ENCODE measurements at regions of chr22 and their contacts with region 1.

Region 1: DNA sequence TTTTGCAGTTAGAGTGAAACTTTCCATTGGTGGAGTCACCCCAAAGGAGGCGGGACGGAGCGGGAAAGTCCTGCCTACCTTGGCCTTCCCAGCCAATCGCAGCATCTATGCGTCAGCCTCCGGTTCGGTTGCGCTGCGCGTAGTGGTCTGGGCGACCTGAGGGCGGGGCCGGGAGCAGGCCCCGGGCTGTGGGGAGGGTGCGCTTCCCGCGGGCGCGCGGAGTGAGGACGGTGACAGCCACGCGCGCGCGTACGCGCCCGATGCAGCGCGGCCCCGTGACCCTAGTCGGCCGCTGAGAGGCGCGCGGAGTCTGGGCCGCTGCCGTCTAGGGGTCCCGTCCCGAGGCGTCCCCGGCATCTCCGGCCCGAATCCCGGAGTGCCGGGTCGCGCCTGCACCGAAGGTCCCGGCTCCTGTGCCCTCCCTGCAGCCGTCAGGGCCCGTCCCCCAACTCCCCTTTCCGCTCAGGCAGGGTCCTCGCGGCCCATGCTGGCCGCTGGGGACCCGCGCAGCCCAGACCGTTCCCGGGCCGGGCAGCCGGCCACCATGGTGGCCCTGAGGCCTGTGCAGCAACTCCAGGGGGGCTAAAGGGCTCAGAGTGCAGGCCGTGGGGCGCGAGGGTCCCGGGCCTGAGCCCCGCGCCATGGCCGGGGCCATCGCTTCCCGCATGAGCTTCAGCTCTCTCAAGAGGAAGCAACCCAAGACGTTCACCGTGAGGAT is at the start of gene NF2:
- DNase-seq: peak; percentile 96 to 99 (median 98)
- ATAC-seq: peak; percentile 98
- H3K4me3 ChIP-seq: peak within 1 kb of the TSS; percentile 92
- H3K4me3 Mint-ChIP-seq: peak within 1 kb of the TSS; percentile 85 to 98 (median 96)
- H3K27ac ChIP-seq: peak within 1 kb of the TSS; percentile 91
- H3K27ac Mint-ChIP-seq: peak within 1 kb of the TSS; percentile 91 to 99 (median 98)
- H3K4me1 ChIP-seq: peaks cover 11 to 16% of the 10 kb centered on the region in 2 donors
- H3K4me1 Mint-ChIP-seq: peaks cover 13 to 40% (median 28%) of the 10 kb centered on the region in 7 donors
- H3K27me3 ChIP-seq: no peaks in the 10 kb centered on the region
- H3K27me3 Mint-ChIP-seq: no peaks in the 10 kb centered on the region
- total RNA-seq, gene NF2: 27.6 to 56.3 (median 28.3) TPM

Region 2: DNA sequence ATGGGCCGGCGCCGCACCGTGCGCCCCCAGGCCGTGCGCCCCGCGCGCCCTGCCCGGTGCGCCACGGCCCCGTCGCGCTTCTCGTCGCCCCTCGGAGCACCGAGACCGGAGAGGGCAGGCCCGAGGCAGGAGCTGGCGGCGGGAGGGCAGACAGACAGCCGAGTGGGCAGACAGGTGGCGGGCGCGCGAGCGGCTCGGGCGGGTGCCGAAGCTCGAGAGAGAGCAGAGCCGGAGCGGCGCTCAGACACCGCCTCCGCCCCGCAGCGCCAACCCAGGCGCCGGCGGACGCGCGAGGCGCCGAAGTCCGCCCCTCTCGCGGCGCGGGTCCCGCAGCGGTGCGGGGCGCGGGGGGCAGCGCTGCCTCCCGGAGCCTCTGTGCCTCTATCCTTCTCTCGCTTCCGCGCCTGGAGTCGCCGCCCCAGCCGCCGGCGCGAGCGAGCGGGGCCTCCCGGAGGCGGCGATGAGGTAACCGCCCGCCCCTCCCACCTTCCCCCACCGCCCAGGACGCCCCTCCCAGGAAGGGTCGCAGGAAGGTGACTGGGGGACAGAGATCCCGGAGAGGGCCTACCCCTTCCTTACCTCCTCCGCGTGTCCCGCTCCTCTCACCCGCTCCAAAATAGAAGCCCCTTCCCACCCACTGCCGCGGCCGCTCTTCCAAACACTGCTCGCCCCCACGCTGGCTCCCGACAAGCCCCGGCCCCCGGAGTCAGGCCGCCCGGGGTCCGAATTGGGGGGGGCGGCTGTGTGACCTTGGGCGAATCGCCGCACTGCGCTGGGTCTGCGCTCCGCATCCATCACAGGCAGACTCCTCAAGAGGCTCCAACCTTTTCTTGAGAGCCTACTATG is 288.0 kb before region 1 on chr22 and contains the start of gene RASL10A:
- CTCF ChIA-PET with region 1: no interaction called
- POLR2A ChIA-PET with region 1: no interaction called
- intact Hi-C with region 1: no loop called
- DNase-seq: no peak
- ATAC-seq: no peak
- H3K4me3 ChIP-seq: no peak within 1 kb of the TSS
- H3K4me3 Mint-ChIP-seq: peak within 1 kb of the TSS; percentile 36 to 79 (median 58)
- H3K27ac ChIP-seq: no peak within 1 kb of the TSS
- H3K27ac Mint-ChIP-seq: peak within 1 kb of the TSS in 1 of 9 donors; percentile 11
- H3K4me1 ChIP-seq: peaks cover 0 to 13% of the 10 kb centered on the region in 2 donors
- H3K4me1 Mint-ChIP-seq: peaks cover 11 to 27% (median 21%) of the 10 kb centered on the region in 7 donors
- H3K27me3 ChIP-seq: peaks cover 0 to 27% of the 10 kb centered on the region in 2 donors
- H3K27me3 Mint-ChIP-seq: peaks cover 28 to 52% (median 38%) of the 10 kb centered on the region in 5 donors
- total RNA-seq, gene RASL10A: 0.32 to 1.7 (median 0.89) TPM in 4 of 5 experiments, not detected in the other

Region 3: DNA sequence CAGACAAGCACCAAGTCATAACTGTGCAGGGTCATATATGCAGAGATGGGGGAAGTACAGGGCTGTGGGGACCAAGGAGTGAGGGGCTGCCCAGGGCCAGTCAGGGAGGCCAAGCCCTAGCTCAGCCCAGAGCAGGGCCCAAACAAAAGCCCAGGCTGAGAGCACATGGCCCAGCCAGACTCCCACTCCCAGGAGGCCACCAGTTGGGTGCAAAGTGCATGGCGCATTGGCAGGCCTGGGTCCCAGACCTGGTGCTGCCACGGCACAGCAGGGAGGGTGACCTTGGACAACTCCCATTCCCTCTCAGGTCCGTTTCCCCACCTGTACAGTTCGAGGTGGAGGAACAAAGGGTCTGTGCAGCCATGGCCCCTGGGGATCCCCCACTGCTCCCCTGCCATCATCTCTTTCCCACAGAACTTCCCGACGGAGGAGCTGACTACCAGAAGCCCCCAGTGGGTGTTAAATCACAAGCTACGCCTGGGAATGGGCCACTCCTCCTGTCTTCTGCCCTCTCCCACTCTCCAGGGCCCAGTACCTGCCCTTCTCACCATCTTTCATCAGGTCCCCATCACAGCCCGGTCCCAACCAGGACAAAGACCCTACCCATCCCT is 23.2 kb before region 1 on chr22:
- CTCF ChIA-PET with region 1: no interaction called
- POLR2A ChIA-PET with region 1: interaction called, 4 read pairs
- intact Hi-C with region 1: loop called (anchors 1 kb)
- DNase-seq: peak in 1 of 9 donors; percentile 26
- ATAC-seq: no peak
- H3K4me3 ChIP-seq: peak overlapping the region; percentile 75
- H3K4me3 Mint-ChIP-seq: peak overlapping the region; percentile 88 to 96 (median 93)
- H3K27ac ChIP-seq: peak overlapping the region; percentile 69
- H3K27ac Mint-ChIP-seq: peak overlapping the region; percentile 78 to 95 (median 91)
- H3K4me1 ChIP-seq: peaks cover 0 to 10% of the 10 kb centered on the region in 2 donors
- H3K4me1 Mint-ChIP-seq: peaks cover 11 to 20% (median 16%) of the 10 kb centered on the region in 7 donors
- H3K27me3 ChIP-seq: no peaks in the 10 kb centered on the region
- H3K27me3 Mint-ChIP-seq: no peaks in the 10 kb centered on the region

Region 4: GRCh38 chr22:29587938-29588699 is 15.4 kb before region 1 on chr22:
- CTCF ChIA-PET with region 1: interaction called, 5 read pairs
- POLR2A ChIA-PET with region 1: interaction called, 14 read pairs
- intact Hi-C with region 1: loop called in 1 of 2 experiments (anchors 1 kb)
- DNase-seq: no peak
- ATAC-seq: no peak
- H3K4me3 ChIP-seq: no peak overlapping the region
- H3K4me3 Mint-ChIP-seq: no peak overlapping the region
- H3K27ac ChIP-seq: no peak overlapping the region
- H3K27ac Mint-ChIP-seq: peak overlapping the region in 5 of 9 donors; percentile 25 to 86 (median 71)
- H3K4me1 ChIP-seq: peaks cover 6 to 8% of the 10 kb centered on the region in 2 donors
- H3K4me1 Mint-ChIP-seq: peaks cover 4 to 11% (median 10%) of the 10 kb centered on the region in 7 donors
- H3K27me3 ChIP-seq: no peaks in the 10 kb centered on the region
- H3K27me3 Mint-ChIP-seq: no peaks in the 10 kb centered on the region

Region 5: DNA sequence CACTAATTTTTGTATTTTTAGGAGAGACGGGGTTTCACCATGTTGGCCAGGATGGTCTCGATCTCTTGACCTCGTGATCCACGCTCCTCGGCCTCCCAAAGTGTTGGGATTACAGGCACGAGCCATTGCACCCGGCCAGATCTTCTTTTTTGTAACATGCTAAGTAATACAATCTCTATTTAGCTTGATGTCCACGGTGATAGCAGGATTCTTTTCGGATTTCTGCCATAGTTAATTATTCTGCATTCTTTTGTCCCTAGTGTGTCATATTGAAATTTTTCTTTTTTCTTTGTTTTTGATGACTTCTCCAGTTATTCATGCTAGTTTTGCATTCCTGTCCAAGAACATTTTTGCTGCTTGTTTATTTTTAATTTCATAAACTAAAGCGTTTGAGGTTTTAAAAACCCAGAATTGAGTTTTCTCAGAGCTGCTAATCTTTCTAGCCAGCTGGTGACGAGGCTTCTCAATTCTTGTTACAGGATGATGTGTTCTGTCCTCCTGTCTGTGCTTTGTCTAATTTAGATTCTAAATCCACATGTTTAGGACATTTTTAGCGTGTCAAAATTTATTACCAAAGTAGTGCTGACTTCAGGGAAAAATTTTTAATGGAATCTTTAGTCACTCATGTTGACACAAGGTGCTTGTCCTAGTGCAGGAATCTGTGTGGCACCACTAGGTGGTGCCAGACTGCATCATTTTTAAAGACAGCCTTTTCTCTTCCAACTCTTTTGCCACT is 21.7 kb after region 1 on chr22:
- CTCF ChIA-PET with region 1: interaction called, 5 read pairs
- POLR2A ChIA-PET with region 1: interaction called, 27 read pairs
- intact Hi-C with region 1: loop called in 1 of 2 experiments (anchors 1 kb)
- DNase-seq: peak in 7 of 9 donors; percentile 15 to 49 (median 40)
- ATAC-seq: peak; percentile 74
- H3K4me3 ChIP-seq: no peak overlapping the region
- H3K4me3 Mint-ChIP-seq: peak overlapping the region in 7 of 10 donors; percentile 2 to 64 (median 25)
- H3K27ac ChIP-seq: peak overlapping the region; percentile 73
- H3K27ac Mint-ChIP-seq: peak overlapping the region; percentile 63 to 89 (median 85)
- H3K4me1 ChIP-seq: peaks cover 0 to 39% of the 10 kb centered on the region in 2 donors
- H3K4me1 Mint-ChIP-seq: peaks cover 41 to 92% (median 85%) of the 10 kb centered on the region in 7 donors
- H3K27me3 ChIP-seq: no peaks in the 10 kb centered on the region
- H3K27me3 Mint-ChIP-seq: no peaks in the 10 kb centered on the region

Region 6: GRCh38 chr22:29837780-29838598 is 234.5 kb after region 1 on chr22 and contains the start of gene ASCC2:
- CTCF ChIA-PET with region 1: no interaction called
- POLR2A ChIA-PET with region 1: interaction called, 4 read pairs
- intact Hi-C with region 1: loop called (anchors 1 kb)
- DNase-seq: peak; percentile 93 to 98 (median 97)
- ATAC-seq: peak; percentile 100
- H3K4me3 ChIP-seq: peak within 1 kb of the TSS; percentile 98
- H3K4me3 Mint-ChIP-seq: peak within 1 kb of the TSS; percentile 89 to 99 (median 95)
- H3K27ac ChIP-seq: peak within 1 kb of the TSS; percentile 79
- H3K27ac Mint-ChIP-seq: peak within 1 kb of the TSS; percentile 94 to 99 (median 95)
- H3K4me1 ChIP-seq: peaks cover 12 to 22% of the 10 kb centered on the region in 2 donors
- H3K4me1 Mint-ChIP-seq: peaks cover 31 to 55% (median 45%) of the 10 kb centered on the region in 7 donors
- H3K27me3 ChIP-seq: no peaks in the 10 kb centered on the region
- H3K27me3 Mint-ChIP-seq: no peaks in the 10 kb centered on the region
- total RNA-seq, gene ASCC2: 90.2 to 101 (median 93.8) TPM

Region 7: GRCh38 chr22:29883045-29883774 is 279.7 kb after region 1 on chr22 and contains the start of gene MTMR3:
- CTCF ChIA-PET with region 1: no interaction called
- POLR2A ChIA-PET with region 1: no interaction called
- intact Hi-C with region 1: loop called (anchors 1 kb)
- DNase-seq: peak; percentile 71 to 99 (median 82)
- ATAC-seq: peak; percentile 91
- H3K4me3 ChIP-seq: peak within 1 kb of the TSS; percentile 69
- H3K4me3 Mint-ChIP-seq: peak within 1 kb of the TSS in 7 of 10 donors; percentile 72 to 95 (median 92)
- H3K27ac ChIP-seq: peak within 1 kb of the TSS; percentile 93
- H3K27ac Mint-ChIP-seq: peak within 1 kb of the TSS; percentile 70 to 93 (median 84)
- H3K4me1 ChIP-seq: peaks cover 17 to 21% of the 10 kb centered on the region in 2 donors
- H3K4me1 Mint-ChIP-seq: peaks cover 0 to 12% (median 1%) of the 10 kb centered on the region in 7 donors
- H3K27me3 ChIP-seq: no peaks in the 10 kb centered on the region
- H3K27me3 Mint-ChIP-seq: peaks cover 0 to 3% (median 0%) of the 10 kb centered on the region in 5 donors
- total RNA-seq, gene MTMR3: 33.2 to 88.7 (median 64.6) TPM

Region 8: GRCh38 chr22:30356449-30357235 is 753.1 kb after region 1 on chr22 and contains the starts of genes CCDC157 and SF3A1:
- CTCF ChIA-PET with region 1: no interaction called
- POLR2A ChIA-PET with region 1: no interaction called
- intact Hi-C with region 1: loop called in 1 of 2 experiments (anchors 1 kb)
- DNase-seq: peak; percentile 78 to 90 (median 86)
- ATAC-seq: peak; percentile 94
- H3K4me3 ChIP-seq: peak within 1 kb of the TSS; percentile 94
- H3K4me3 Mint-ChIP-seq: peak within 1 kb of the TSS; percentile 92 to 99 (median 95)
- H3K27ac ChIP-seq: peak within 1 kb of the TSS; percentile 100
- H3K27ac Mint-ChIP-seq: peak within 1 kb of the TSS; percentile 86 to 99 (median 95)
- H3K4me1 ChIP-seq: peaks cover 32 to 37% of the 10 kb centered on the region in 2 donors
- H3K4me1 Mint-ChIP-seq: peaks cover 35 to 62% (median 54%) of the 10 kb centered on the region in 7 donors
- H3K27me3 ChIP-seq: no peaks in the 10 kb centered on the region
- H3K27me3 Mint-ChIP-seq: peaks cover 0 to 6% (median 0%) of the 10 kb centered on the region in 5 donors
- total RNA-seq, gene CCDC157: 1.8 to 6.9 (median 3.2) TPM
- total RNA-seq, gene SF3A1: 267 to 341 (median 284) TPM

Measured in naive thymus-derived CD4-positive, alpha-beta T cell (primary cell).